Activated T-helper 1 cell treated with anti-CD3 and anti-CD28 coated beads, Interleukin-12 subunit alpha, Interleukin-12 subunit beta, Interleukin-2, Interleukin-4 antibody, amounts not matched to agents 30 ng/mL and 10 ng/mL and 1 ng/mL, durations not matched to agents 14 hours and 24 hours and 36 hours (primary cell): ENCODE measurements at regions of chr1 and their contacts with region 1.

Region 1: DNA sequence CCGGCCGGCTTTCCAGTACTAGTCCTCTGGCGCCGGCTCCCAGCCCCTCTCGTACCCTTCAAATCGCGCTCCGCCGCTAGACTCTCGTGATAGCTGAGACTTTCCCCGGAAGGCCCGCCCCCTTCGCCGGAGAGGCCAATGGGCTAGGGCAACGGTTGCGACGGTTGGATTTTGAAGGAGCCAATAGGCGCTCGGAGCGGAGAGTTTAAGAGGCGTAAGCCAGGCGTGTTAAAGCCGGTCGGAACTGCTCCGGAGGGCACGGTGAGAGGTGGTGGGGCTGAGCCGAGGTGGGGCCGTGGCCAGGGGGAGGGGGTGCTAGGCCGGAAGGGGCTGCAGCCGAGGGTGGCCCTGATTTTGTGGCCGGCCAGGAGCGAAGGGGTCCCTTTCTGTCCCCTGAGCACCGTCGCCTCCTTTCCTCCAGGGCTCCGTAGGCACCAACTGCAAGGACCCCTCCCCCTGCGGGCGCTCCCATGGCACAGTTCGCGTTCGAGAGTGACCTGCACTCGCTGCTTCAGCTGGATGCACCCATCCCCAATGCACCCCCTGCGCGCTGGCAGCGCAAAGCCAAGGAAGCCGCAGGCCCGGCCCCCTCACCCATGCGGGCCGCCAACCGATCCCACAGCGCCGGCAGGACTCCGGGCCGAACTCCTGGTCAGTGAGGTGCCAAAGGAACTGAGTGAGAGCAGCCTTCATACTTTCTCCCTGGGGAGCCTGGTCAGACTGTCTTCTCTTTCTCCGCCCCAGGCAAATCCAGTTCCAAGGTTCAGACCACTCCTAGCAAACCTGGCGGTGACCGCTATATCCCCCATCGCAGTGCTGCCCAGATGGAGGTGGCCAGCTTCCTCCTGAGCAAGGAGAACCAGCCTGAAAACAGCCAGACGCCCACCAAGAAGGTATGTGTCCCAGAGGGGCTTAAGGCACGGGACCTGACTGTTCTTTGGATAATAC is at the start of gene CDC20:
- DNase-seq: peak; percentile 99
- H3K4me3 Mint-ChIP-seq: peak within 1 kb of the TSS; percentile 96
- H3K27ac Mint-ChIP-seq: peak within 1 kb of the TSS; percentile 92
- H3K4me1 Mint-ChIP-seq: peaks cover 50% of the 10 kb centered on the region
- H3K27me3 Mint-ChIP-seq: no peaks in the 10 kb centered on the region
- total RNA-seq, gene CDC20: 82.9 and 91.8 TPM in 2 replicates

Region 2: GRCh38 chr1:42518908-42519307 is 840.1 kb before region 1 on chr1:
- intact Hi-C with region 1: no loop called
- DNase-seq: no peak
- H3K4me3 Mint-ChIP-seq: no peak overlapping the region
- H3K27ac Mint-ChIP-seq: no peak overlapping the region
- H3K4me1 Mint-ChIP-seq: no peaks in the 10 kb centered on the region
- H3K27me3 Mint-ChIP-seq: no peaks in the 10 kb centered on the region

Region 3: DNA sequence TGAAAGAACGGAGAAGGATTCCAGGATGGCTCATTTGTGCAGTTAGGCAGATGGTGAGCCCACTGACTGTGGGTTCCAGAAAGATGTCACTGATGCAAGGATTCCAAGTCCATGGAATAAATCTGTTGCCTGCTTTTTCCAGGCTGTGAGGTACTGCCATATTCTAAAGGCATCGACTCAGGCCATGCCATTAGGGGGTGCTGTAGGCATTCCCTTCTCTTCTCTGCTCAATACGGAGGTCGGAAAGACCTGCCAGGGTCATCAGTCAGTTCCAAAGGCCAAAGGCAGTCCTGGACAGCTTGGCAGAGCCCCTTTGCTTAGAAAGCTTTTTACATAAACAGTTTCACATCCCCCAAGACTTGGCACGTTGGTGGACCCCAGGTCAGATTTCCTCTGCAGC is 120.9 kb before region 1 on chr1:
- intact Hi-C with region 1: loop called (anchors 1 kb)
- DNase-seq: peak; percentile 13
- H3K4me3 Mint-ChIP-seq: no peak overlapping the region
- H3K27ac Mint-ChIP-seq: peak overlapping the region; percentile 30
- H3K4me1 Mint-ChIP-seq: peaks cover 17% of the 10 kb centered on the region
- H3K27me3 Mint-ChIP-seq: peaks cover 2% of the 10 kb centered on the region

Region 4: DNA sequence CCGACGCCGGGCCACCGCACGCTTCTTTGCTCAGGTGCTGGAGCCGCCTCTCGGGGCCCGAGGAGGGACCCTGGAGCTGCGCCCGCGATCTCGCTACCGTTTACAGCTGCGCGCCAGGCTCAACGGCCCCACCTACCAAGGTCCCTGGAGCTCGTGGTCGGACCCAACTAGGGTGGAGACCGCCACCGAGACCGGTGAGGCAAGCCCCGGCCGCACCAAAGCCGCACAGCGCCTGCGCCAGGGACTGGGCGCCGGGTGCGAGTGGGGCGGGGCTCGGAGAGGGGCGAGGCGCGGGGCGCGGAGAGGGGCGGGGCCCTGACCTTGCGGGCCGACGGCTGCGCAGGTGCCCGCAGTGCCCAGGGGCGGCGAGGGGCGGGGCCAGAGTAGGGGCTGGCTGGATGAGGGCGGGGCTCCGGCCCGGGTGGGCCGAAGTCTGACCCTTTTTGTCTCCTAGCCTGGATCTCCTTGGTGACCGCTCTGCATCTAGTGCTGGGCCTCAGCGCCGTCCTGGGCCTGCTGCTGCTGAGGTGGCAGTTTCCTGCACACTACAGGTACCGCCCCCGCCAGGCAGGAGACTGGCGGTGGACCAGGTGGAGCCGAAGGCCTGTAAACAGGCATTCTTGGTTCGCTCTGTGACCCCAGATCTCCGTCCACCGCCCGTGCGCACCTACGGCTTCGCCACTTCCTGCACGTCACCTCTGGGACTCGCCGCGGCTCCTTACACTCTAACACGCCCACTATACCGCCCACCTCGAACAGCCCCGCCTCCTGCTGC is 10.0 kb before region 1 on chr1:
- intact Hi-C with region 1: loop called (anchors 1 kb)
- DNase-seq: peak; percentile 48
- H3K4me3 Mint-ChIP-seq: peak overlapping the region; percentile 62
- H3K27ac Mint-ChIP-seq: peak overlapping the region; percentile 80
- H3K4me1 Mint-ChIP-seq: peaks cover 29% of the 10 kb centered on the region
- H3K27me3 Mint-ChIP-seq: peaks cover 6% of the 10 kb centered on the region

Region 5: DNA sequence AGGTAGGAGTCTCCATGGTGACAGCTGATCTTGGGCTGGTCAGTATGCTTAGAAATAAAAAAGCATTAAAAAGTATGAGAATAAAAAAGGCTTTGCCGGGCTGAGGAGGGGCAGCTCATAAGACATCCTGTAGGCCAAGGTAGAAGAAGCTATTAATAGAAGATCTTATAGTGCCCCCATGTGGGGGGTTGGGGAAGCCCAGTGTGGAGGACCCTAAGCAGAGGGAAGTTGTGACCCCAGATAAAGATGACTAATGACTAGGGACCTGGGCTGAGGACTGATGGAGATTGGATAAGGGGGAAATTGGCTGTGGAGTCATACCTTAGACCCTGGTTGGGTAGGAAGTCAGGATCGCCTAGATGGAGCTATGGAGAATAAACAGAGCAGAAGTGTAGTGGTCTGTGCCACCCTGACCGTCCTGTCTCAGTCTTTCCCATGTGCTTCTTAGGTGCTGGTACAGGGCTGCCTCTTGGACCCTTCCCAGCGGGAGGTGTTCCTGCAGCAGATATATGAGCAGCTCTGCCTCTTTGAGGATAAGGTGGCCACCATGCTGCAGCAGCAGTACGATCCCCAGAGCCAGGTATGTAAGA is 55.7 kb after region 1 on chr1:
- intact Hi-C with region 1: loop called (anchors 1 kb)
- DNase-seq: peak; percentile 22
- H3K4me3 Mint-ChIP-seq: no peak overlapping the region
- H3K27ac Mint-ChIP-seq: peak overlapping the region; percentile 10
- H3K4me1 Mint-ChIP-seq: no peaks in the 10 kb centered on the region
- H3K27me3 Mint-ChIP-seq: no peaks in the 10 kb centered on the region

Region 6: DNA sequence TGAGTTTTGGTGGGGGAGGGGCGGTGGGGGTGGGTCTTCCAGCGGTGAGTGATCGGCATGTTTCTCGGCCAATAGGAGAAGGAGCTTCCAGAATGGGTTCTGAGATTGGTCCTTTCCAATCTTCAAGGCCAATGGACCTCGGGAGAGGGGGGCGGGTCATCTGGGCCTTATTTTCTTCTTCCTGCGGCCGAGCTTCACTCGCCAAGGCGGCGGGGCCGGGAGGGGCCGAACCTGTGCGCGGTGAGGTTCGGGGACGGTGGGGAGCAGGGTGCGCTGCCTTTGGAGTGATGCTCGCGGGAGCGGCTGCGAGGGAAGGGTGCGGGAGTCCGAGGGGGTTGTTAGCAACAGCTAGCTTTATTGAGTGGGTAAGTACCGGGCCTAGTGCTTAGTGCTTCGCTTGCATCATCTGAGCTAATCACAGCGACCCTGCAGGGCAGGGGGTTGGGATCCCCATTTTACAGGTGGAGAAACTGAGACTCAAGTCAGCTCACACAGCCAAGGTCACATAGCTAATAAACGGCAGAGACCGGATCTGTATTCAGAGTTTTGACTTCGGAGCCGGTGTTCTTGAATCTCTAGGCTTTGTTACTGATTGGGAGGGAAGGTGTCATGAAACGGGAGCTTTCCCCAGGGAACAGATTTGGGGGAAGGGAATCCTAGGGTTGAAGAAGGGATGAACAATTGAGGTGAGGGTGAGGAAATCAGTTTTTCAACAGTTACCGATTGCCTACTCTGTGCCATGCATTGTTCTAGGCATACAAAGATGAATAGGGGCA is 291.5 kb after region 1 on chr1:
- intact Hi-C with region 1: loop called (anchors 1 kb)
- DNase-seq: peak; percentile 89
- H3K4me3 Mint-ChIP-seq: peak overlapping the region; percentile 98
- H3K27ac Mint-ChIP-seq: peak overlapping the region; percentile 98
- H3K4me1 Mint-ChIP-seq: peaks cover 27% of the 10 kb centered on the region
- H3K27me3 Mint-ChIP-seq: peaks cover under 1% of the 10 kb centered on the region

Region 7: DNA sequence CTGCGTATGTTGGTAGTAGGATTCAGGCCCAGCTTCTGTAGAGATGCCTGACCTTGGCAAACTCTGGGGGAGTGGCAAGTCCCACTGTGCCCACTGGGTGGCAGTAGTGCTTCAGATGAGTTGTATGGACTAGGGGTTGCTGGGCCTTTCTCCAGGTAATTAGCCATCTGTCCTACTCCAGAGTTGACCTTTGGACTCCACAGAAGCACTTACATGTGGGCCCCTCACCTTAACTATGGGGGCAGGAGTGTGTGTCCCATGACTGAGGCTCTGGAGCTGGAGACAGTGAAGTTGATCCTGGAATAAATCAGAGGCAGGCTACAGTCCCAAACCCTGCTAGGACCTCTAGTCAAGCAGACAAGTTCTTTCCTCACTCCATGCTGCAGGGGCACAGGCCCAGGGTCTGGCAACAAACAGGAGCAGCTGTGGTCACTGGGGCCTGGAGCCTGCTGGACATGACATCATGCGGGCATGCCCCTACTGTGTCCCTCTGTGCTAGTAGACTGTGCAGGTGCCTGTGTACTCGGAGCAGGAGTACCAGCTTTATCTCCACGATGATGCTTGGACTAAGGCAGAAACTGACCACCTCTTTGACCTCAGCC is 858.9 kb after region 1 on chr1:
- intact Hi-C with region 1: no loop called
- DNase-seq: peak; percentile 61
- H3K4me3 Mint-ChIP-seq: no peak overlapping the region
- H3K27ac Mint-ChIP-seq: no peak overlapping the region
- H3K4me1 Mint-ChIP-seq: peaks cover 26% of the 10 kb centered on the region
- H3K27me3 Mint-ChIP-seq: no peaks in the 10 kb centered on the region